SK-N-SH (cell line): ENCODE measurements at regions of chr1 and their contacts with region 1.

Region 1: GRCh38 chr1:9629445-9630201 is 21.9 kb upstream of the PIK3CD start:
- DNase-seq: no peak
- H3K4me3 ChIP-seq: no peak overlapping the region
- H3K27ac ChIP-seq: no peak overlapping the region
- H3K4me1 ChIP-seq: no peaks in the 10 kb centered on the region; a peak in 1 of 4 replicates
- H3K27me3 ChIP-seq: no peaks in the 10 kb centered on the region
- CTCF ChIP-seq: no peak
- EP300 ChIP-seq: no peak
- RAD21 ChIP-seq: no peak

Region 2: DNA sequence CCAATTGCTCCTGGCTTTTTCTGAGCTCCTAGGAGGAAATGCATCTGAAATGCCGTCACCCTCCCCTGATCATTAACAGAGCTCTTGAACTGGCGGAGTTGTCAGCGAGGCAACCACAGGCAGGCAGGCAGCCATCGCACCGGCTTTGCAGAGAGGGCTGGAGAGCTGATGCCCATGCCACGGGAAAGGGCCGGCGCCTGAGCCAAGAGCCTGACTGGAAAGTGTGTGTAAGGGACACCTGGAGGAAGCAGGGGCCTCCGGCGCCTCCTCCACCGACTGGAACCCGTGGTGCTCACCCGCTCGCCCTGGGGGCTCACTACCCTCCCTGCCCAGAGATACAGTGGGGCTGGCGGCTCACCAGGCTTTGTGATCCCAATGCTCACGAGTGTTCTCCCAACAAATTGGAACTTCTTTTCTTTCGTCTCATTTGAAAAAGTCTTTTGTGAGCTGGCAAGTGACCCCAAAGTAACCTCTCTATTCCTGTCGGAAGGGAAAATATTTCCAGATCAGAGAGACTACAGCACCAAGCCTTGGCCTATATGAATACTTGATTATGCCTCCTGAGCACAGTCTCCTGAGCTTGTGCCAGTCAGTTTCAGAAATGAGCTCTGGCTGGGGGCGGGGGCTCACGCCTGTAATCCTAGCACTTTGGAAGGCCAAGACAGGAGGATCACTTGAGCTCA is 188.0 kb before region 1 on chr1:
- CTCF ChIA-PET with region 1: no interaction called
- POLR2A ChIA-PET with region 1: no interaction called
- DNase-seq: no peak
- H3K4me3 ChIP-seq: no peak overlapping the region
- H3K27ac ChIP-seq: no peak overlapping the region
- H3K4me1 ChIP-seq: no peaks in the 10 kb centered on the region
- H3K27me3 ChIP-seq: no peaks in the 10 kb centered on the region
- CTCF ChIP-seq: no peak
- EP300 ChIP-seq: no peak
- RAD21 ChIP-seq: no peak

Region 3: GRCh38 chr1:9615316-9616063 is 14.1 kb before region 1 on chr1:
- CTCF ChIA-PET with region 1: interaction called, 74 read pairs
- POLR2A ChIA-PET with region 1: no interaction called
- DNase-seq: peak; percentile 69
- H3K4me3 ChIP-seq: no peak overlapping the region
- H3K27ac ChIP-seq: no peak overlapping the region; a peak in 1 of 4 replicates
- H3K4me1 ChIP-seq: peaks cover 0 to 35% of the 10 kb centered on the region in 2 experiments; a peak in 1 of 4 replicates
- H3K27me3 ChIP-seq: no peaks in the 10 kb centered on the region
- CTCF ChIP-seq: peak; percentile 55
- EP300 ChIP-seq: no peak
- RAD21 ChIP-seq: peak; percentile 29; the same call in 1 of the 2 replicates

Region 4: DNA sequence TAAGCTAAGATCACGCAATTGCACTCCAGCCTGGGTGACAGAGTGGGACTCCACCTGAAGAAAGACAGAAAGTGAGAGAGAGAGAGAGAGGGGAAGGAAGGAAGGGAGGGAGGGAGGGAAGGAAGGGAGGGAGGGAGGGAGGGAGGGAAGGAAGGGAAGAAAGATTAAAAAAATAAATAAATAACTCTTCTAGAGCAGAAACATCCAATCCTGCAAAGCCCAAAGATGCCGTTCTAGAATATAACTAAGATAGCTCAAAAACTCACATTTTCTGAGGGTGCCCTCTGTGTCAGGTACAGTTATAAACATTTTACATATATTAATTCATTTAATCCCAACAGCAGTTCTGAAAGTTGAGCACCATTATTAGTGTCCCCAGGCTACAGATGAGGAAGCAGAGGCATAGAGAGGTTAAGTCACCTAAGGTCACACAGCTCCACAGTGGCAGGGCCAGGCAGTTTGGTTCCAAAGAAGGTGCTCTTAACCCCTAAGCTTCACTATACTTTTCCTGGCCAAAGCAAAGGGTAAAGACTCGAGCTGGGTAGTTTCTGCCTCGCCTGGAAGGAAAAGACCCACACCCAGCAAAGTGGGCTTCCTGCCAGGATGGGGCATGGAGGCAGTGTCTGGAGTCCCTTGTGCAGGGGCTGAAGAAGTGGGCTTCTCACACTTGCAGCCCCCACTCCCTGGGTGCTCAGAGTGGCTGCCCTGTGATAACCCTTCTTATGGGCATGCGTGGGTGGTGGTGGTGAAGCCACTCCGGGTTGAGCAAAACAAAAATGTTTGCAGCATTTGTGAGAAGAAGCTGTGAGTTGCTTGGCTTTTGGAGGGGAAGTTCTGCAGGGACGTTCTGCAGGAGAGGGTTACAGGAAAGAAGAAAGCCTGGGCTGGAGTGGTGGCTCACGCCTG is 14.0 kb after region 1 on chr1:
- CTCF ChIA-PET with region 1: interaction called, 18 read pairs
- POLR2A ChIA-PET with region 1: no interaction called
- DNase-seq: no peak
- H3K4me3 ChIP-seq: no peak overlapping the region
- H3K27ac ChIP-seq: no peak overlapping the region
- H3K4me1 ChIP-seq: no peaks in the 10 kb centered on the region
- H3K27me3 ChIP-seq: no peaks in the 10 kb centered on the region
- CTCF ChIP-seq: no peak
- EP300 ChIP-seq: no peak
- RAD21 ChIP-seq: no peak

Region 5: GRCh38 chr1:9651565-9652378 is 22.1 kb after region 1 on chr1 and contains the start of gene PIK3CD:
- CTCF ChIA-PET with region 1: interaction called, 20 read pairs
- POLR2A ChIA-PET with region 1: interaction called, 3 read pairs
- DNase-seq: peak; percentile 85
- H3K4me3 ChIP-seq: peak within 1 kb of the TSS; percentile 34 to 47
- H3K27ac ChIP-seq: no peak within 1 kb of the TSS
- H3K4me1 ChIP-seq: no peaks in the 10 kb centered on the region; a peak in 1 of 4 replicates
- H3K27me3 ChIP-seq: peaks cover 34% of the 10 kb centered on the region
- CTCF ChIP-seq: no peak
- EP300 ChIP-seq: no peak
- RAD21 ChIP-seq: no peak
- polyA plus RNA-seq, gene PIK3CD: 5.5 and 6.0 TPM in 2 replicates

Region 6: GRCh38 chr1:9689011-9689706 is 59.5 kb after region 1 on chr1:
- CTCF ChIA-PET with region 1: interaction called, 12 read pairs
- POLR2A ChIA-PET with region 1: no interaction called
- DNase-seq: peak; percentile 94
- H3K4me3 ChIP-seq: peak overlapping the region; percentile 63
- H3K27ac ChIP-seq: no peak overlapping the region
- H3K4me1 ChIP-seq: peaks cover 0 to 18% of the 10 kb centered on the region in 2 experiments; a peak in 2 of 4 replicates
- H3K27me3 ChIP-seq: no peaks in the 10 kb centered on the region
- CTCF ChIP-seq: no peak
- EP300 ChIP-seq: no peak
- RAD21 ChIP-seq: no peak